PC-9 (cell line): ENCODE measurements at regions of chr15 and their contacts with region 1.

Region 1: GRCh38 chr15:61938249-61938648 is 122.0 kb downstream of the VPS13C start:
- DNase-seq: no peak
- H3K4me3 ChIP-seq: no peak overlapping the region
- H3K27ac ChIP-seq: no peak overlapping the region
- H3K4me1 ChIP-seq: no peaks in the 10 kb centered on the region
- H3K27me3 ChIP-seq: no peaks in the 10 kb centered on the region
- CTCF ChIP-seq: no peak

Region 2: DNA sequence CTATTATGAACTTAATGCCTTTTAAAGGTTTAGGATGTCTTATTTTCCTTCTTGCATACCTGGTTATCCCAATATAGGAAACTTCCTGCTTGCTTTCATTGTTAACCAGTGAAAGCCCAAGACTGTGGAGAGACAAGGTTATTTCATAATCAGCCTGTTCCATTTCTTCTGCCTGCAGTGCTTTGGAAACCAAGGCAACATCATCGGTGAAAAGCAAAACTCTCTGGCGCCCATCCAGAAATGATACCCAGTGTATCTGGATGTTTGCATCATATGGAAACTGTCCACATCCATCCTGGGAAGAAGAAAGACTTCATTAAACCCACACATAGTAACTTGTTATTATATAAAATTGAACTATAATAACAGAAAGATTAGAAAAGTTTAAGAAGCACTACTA is 48.1 kb before region 1 on chr15:
- CTCF ChIA-PET with region 1: no interaction called
- POLR2A ChIA-PET with region 1: no interaction called
- intact Hi-C with region 1: no loop called
- DNase-seq: no peak
- H3K4me3 ChIP-seq: no peak overlapping the region
- H3K27ac ChIP-seq: no peak overlapping the region
- H3K4me1 ChIP-seq: no peaks in the 10 kb centered on the region
- H3K27me3 ChIP-seq: no peaks in the 10 kb centered on the region
- CTCF ChIP-seq: no peak

Region 3: GRCh38 chr15:61983076-61983475 is 44.8 kb after region 1 on chr15:
- CTCF ChIA-PET with region 1: no interaction called
- POLR2A ChIA-PET with region 1: no interaction called
- intact Hi-C with region 1: no loop called
- DNase-seq: peak in 1 of 2 experiments; percentile 37
- H3K4me3 ChIP-seq: no peak overlapping the region
- H3K27ac ChIP-seq: no peak overlapping the region
- H3K4me1 ChIP-seq: no peaks in the 10 kb centered on the region
- H3K27me3 ChIP-seq: no peaks in the 10 kb centered on the region
- CTCF ChIP-seq: no peak

Region 4: GRCh38 chr15:61994216-61994615 is 56.0 kb after region 1 on chr15:
- CTCF ChIA-PET with region 1: no interaction called
- POLR2A ChIA-PET with region 1: interaction called, 11 read pairs
- intact Hi-C with region 1: no loop called
- DNase-seq: no peak
- H3K4me3 ChIP-seq: no peak overlapping the region
- H3K27ac ChIP-seq: no peak overlapping the region
- H3K4me1 ChIP-seq: no peaks in the 10 kb centered on the region
- H3K27me3 ChIP-seq: no peaks in the 10 kb centered on the region
- CTCF ChIP-seq: no peak